PC-3 (cell line): ENCODE measurements at regions of chr3 and their contacts with region 1.

Region 1: DNA sequence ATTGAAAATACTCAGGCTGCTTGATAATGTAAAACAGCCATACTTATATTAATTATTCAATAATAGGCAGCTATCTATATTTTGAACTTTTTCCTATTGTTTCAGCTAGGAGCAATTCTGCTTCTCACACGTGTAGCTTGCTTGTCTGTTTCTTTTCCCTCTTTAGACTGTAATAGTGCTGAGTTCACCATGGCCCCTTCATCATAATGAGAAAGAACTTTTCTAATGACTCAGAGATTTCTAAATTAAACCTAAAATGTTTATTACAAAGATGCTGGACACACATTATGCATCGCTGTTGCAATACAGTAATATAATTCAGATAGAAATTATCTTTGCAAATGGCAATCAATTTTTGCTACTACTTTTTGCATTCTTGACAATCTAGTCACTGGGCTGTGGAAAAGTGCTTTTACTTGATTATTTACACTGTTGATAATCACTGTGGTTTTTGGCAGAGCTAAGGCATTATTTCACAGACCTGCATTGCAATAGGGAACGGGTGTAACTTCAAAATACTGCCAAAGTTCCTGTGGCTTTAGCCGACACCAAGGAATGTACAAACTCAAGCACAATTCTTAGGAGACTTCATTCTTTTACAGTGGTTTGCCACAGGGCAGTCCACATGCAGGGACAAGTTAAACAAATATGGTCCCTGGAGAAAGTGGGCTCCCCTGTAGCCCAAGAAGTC is 281.0 kb upstream of the TBL1XR1 start:
- DNase-seq: peak; percentile 98
- ATAC-seq: peak; percentile 92
- H3K4me3 ChIP-seq: peak overlapping the region; percentile 24; the same call in 1 of the 2 replicates
- H3K27ac ChIP-seq: peak overlapping the region; percentile 84
- H3K4me1 ChIP-seq: peaks cover 26% of the 10 kb centered on the region
- H3K27me3 ChIP-seq: no peaks in the 10 kb centered on the region
- CTCF ChIP-seq: no peak

Region 2: GRCh38 chr3:177050501-177051237 is 427.6 kb before region 1 on chr3:
- CTCF ChIA-PET with region 1: no interaction called
- POLR2A ChIA-PET with region 1: no interaction called
- intact Hi-C with region 1: loop called (anchors 2 kb)
- DNase-seq: peak; percentile 67
- ATAC-seq: peak; percentile 71
- H3K4me3 ChIP-seq: no peak overlapping the region
- H3K27ac ChIP-seq: no peak overlapping the region
- H3K4me1 ChIP-seq: no peaks in the 10 kb centered on the region
- H3K27me3 ChIP-seq: no peaks in the 10 kb centered on the region
- CTCF ChIP-seq: peak; percentile 75

Region 3: DNA sequence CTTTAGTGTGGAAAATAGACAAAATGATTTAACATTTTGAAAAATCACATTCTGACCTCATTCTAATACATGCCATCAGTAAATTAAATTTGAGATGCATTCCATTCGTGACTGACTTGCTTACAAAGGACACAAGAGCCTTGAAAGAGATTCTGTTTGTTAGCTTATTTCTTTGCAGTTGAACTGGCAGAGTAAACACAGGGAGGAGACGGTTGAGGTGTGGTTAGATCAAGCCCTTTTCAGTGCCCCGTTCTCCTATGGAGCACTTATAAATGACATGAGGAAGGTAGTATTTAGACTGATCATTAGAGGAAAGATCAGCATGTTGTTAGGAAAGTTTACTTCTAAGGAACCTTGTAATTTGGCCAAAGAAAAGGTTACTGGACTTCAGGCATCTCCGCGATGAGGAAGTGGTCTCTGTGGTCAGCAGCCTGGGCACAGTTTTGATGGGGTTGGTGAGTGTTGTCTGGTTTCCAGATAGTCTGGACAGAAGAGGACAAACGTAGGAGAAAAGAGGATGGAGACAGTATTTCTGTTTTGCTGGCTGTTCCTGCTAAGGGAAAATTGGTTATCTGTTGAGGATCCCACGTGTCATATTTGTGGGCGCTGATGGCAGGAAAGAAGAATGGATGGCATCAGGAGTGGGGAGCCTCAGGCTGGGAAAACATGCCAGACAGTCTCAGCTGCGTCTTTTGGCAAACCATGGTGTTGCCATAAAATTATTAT is 47.8 kb after region 1 on chr3:
- CTCF ChIA-PET with region 1: no interaction called
- POLR2A ChIA-PET with region 1: no interaction called
- intact Hi-C with region 1: loop called (anchors 2 kb)
- DNase-seq: peak; percentile 37
- ATAC-seq: peak; percentile 66
- H3K4me3 ChIP-seq: no peak overlapping the region
- H3K27ac ChIP-seq: peak overlapping the region; percentile 35
- H3K4me1 ChIP-seq: peaks cover 33% of the 10 kb centered on the region
- H3K27me3 ChIP-seq: no peaks in the 10 kb centered on the region
- CTCF ChIP-seq: no peak

Region 4: GRCh38 chr3:177597311-177598096 is 119.2 kb after region 1 on chr3:
- CTCF ChIA-PET with region 1: no interaction called
- POLR2A ChIA-PET with region 1: no interaction called
- intact Hi-C with region 1: loop called (anchors 10 kb)
- DNase-seq: no peak
- ATAC-seq: no peak
- H3K4me3 ChIP-seq: no peak overlapping the region
- H3K27ac ChIP-seq: peak overlapping the region; percentile 78
- H3K4me1 ChIP-seq: peaks cover 60% of the 10 kb centered on the region
- H3K27me3 ChIP-seq: no peaks in the 10 kb centered on the region
- CTCF ChIP-seq: no peak

Region 5: GRCh38 chr3:177615015-177615414 is 136.7 kb after region 1 on chr3:
- CTCF ChIA-PET with region 1: no interaction called
- POLR2A ChIA-PET with region 1: no interaction called
- intact Hi-C with region 1: loop called (anchors 2 kb)
- DNase-seq: peak; percentile 97
- ATAC-seq: peak; percentile 64
- H3K4me3 ChIP-seq: no peak overlapping the region
- H3K27ac ChIP-seq: peak overlapping the region; percentile 20; the same call in 1 of the 2 replicates
- H3K4me1 ChIP-seq: peaks cover 49% of the 10 kb centered on the region
- H3K27me3 ChIP-seq: no peaks in the 10 kb centered on the region
- CTCF ChIP-seq: no peak

Region 6: GRCh38 chr3:177810162-177810623 is 331.9 kb after region 1 on chr3:
- CTCF ChIA-PET with region 1: no interaction called
- POLR2A ChIA-PET with region 1: no interaction called
- intact Hi-C with region 1: loop called (anchors 5 kb)
- DNase-seq: peak; percentile 95
- ATAC-seq: peak; percentile 93
- H3K4me3 ChIP-seq: no peak overlapping the region
- H3K27ac ChIP-seq: peak overlapping the region; percentile 53
- H3K4me1 ChIP-seq: peaks cover 30% of the 10 kb centered on the region
- H3K27me3 ChIP-seq: no peaks in the 10 kb centered on the region
- CTCF ChIP-seq: no peak

Region 7: DNA sequence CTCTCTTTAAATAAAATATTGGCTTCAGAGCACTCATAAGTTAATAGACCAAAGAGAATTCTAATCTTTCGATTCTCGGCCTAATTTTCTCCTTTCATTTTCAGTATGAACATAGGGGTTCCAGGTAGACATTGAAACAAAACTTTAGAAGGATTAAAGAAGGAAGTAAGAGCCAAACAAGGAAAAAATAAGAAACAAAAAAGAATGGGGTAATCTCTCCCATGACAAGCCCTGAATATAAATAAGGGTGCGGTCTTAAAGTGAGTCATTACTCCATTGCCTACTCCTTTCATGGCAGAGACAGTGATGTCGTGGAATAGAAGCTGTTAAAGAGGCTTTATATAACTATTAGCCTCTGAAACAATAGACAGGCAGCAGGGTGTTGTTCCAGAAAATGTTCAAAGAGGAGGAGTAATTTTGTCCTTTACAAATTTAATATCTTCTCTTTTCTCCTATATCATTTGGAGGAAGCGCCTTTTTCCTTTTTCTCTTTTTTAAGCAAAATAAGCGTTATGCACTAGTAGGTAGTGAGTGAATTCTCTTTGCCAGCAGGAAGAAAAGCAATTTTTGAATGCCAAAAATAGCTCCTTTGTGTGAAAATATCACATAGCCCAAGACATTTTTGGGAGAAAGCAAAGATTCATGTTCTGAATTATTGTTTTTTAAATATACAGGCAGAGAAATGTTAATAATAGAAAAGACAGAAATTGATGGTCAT is 450.0 kb after region 1 on chr3:
- CTCF ChIA-PET with region 1: no interaction called
- POLR2A ChIA-PET with region 1: no interaction called
- intact Hi-C with region 1: loop called (anchors 2 kb)
- DNase-seq: peak; percentile 82
- ATAC-seq: peak; percentile 69
- H3K4me3 ChIP-seq: no peak overlapping the region
- H3K27ac ChIP-seq: peak overlapping the region; percentile 96
- H3K4me1 ChIP-seq: peaks cover 60% of the 10 kb centered on the region
- H3K27me3 ChIP-seq: no peaks in the 10 kb centered on the region
- CTCF ChIP-seq: no peak